ENCODE measurements at regions of chr21 and their contacts with region 1.

Region 1: DNA sequence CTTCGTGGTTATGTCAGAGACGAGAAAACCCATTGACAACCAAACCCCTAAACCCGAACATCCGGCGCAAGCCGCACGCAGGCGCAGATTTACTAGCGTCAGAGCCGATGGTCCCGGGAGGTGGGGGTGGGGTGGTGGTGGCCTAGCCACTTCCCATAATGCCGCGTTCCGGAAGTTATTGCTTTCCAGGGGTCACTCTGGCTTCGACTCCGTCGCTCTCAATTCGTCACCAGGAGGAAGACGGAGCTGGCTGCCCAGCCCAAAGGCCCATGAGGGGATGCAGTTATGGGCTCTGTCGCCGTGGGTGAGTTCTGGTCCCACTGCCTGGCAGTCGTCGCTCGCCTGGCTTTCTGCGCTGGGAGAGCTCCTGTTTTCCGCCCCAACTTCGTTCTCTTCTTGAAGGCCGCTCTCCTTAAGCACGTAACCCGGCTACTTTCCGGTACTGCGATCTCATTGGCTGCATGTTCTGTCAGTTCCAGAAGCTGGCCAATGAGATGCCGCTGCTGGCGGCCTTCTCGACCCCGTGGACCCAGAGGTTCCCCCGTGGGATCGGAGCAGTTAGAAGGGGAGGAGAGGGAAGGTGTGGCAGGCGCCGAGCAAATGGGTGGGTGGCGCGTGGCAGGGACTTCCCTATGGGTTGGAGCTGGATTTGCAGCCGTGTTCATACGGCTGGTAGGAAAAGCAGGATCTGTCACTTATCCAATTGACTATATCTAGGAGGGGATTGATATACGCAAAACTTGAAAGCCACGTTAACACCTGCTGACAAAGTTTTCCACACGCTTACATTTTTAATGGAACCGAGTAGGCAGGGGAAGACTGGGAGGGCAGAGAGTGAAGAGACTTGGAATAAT is at the start of gene USP16:
- DNase-seq: peak; percentile 89
- ATAC-seq: peak; percentile 98
- H3K4me3 Mint-ChIP-seq: peak within 1 kb of the TSS; percentile 99
- H3K27ac Mint-ChIP-seq: peak within 1 kb of the TSS; percentile 99
- H3K4me1 Mint-ChIP-seq: peaks cover 18% of the 10 kb centered on the region
- H3K27me3 Mint-ChIP-seq: no peaks in the 10 kb centered on the region
- CTCF ChIP-seq: no peak
- total RNA-seq, gene USP16: 19.4 to 20.8 TPM (median 19.4 TPM) in 3 replicates

Region 2: GRCh38 chr21:28992526-28993292 is 32.0 kb before region 1 on chr21 and contains the start of gene LTN1:
- CTCF ChIA-PET with region 1: no interaction called
- POLR2A ChIA-PET with region 1: interaction called, 11 read pairs
- DNase-seq: peak; percentile 99
- ATAC-seq: peak; percentile 92
- H3K4me3 Mint-ChIP-seq: peak within 1 kb of the TSS; percentile 99
- H3K27ac Mint-ChIP-seq: peak within 1 kb of the TSS; percentile 99
- H3K4me1 Mint-ChIP-seq: peaks cover 16% of the 10 kb centered on the region
- H3K27me3 Mint-ChIP-seq: peaks cover 9% of the 10 kb centered on the region
- CTCF ChIP-seq: no peak
- total RNA-seq, gene LTN1: 18.9 to 23.0 TPM (median 21.1 TPM) in 3 replicates

Region 3: DNA sequence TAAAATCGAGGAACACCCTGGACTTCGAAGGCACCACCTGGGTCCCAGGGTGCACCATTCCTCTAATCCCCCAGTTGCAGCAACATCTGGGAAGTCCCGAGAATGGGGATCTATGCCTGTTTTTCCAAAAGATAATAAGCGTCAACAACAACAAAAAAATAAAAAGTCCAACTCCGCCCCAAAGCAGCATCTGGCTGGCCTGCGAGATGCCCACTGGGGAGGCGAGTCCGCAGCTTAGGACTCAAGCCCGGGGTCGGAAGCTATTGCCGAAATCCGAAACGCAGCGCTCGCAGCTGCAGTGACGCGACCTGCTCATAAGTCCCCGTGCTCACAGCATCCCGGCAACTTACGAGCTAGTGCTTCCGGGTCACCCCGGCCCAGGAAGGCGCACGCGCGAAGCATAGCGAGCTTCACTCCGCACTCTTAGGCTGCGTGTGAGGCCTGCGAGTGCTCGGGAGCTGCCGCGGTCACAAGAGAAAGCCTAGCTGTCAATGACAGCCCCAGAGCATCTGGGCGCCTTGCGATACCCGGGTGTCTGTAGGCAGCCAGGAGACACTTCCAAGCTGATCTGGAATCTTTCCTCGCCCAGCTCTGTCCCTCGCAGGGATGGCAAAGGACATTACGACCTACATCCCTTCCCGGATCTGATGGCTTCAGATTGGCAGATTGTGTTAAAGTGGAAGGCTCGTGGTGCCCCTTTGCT is 22.1 kb before region 1 on chr21:
- CTCF ChIA-PET with region 1: interaction called, 5 read pairs
- POLR2A ChIA-PET with region 1: interaction called, 22 read pairs
- DNase-seq: peak; percentile 88
- ATAC-seq: peak; percentile 99
- H3K4me3 Mint-ChIP-seq: peak overlapping the region; percentile 81
- H3K27ac Mint-ChIP-seq: peak overlapping the region; percentile 98
- H3K4me1 Mint-ChIP-seq: no peaks in the 10 kb centered on the region; the same call in 1 of the 2 replicates
- H3K27me3 Mint-ChIP-seq: peaks cover 8% of the 10 kb centered on the region; the same call in 1 of the 2 replicates
- CTCF ChIP-seq: no peak

Region 4: DNA sequence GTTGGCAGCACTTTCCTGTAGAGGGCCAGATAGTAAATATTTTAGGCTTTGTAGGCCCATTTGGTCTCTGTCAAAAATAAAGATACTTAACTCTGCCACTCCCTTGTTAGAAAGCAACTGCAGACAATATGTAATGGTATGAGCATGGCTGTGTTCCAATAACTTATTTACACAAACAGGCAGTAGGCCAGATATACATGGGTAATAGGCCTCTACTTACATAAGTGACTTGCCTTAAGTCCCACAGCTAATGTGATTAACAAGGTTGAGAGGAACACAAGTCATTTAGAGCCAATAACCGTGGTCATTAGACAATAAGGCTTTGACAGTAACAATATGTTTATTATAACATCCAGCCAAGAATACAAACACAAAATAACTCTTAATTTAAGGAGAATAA is 31.3 kb after region 1 on chr21:
- CTCF ChIA-PET with region 1: no interaction called
- POLR2A ChIA-PET with region 1: no interaction called
- DNase-seq: no peak
- ATAC-seq: no peak
- H3K4me3 Mint-ChIP-seq: no peak overlapping the region
- H3K27ac Mint-ChIP-seq: no peak overlapping the region; the same call in 1 of the 2 replicates
- H3K4me1 Mint-ChIP-seq: no peaks in the 10 kb centered on the region
- H3K27me3 Mint-ChIP-seq: no peaks in the 10 kb centered on the region
- CTCF ChIP-seq: no peak

Region 5: GRCh38 chr21:29073222-29074006 is 48.7 kb after region 1 on chr21 and contains the start of gene CCT8:
- CTCF ChIA-PET with region 1: interaction called, 3 read pairs
- POLR2A ChIA-PET with region 1: interaction called, 11 read pairs
- DNase-seq: peak; percentile 97
- ATAC-seq: peak; percentile 96
- H3K4me3 Mint-ChIP-seq: peak within 1 kb of the TSS; percentile 98
- H3K27ac Mint-ChIP-seq: peak within 1 kb of the TSS; percentile 97
- H3K4me1 Mint-ChIP-seq: peaks cover 19% of the 10 kb centered on the region
- H3K27me3 Mint-ChIP-seq: no peaks in the 10 kb centered on the region
- CTCF ChIP-seq: no peak
- total RNA-seq, gene CCT8: 329 to 335 TPM (median 333 TPM) in 3 replicates

Measured in WTC11 (cell line).